SK-N-SH (cell line): ENCODE measurements at regions of chr5 and their contacts with region 1.

Region 1: DNA sequence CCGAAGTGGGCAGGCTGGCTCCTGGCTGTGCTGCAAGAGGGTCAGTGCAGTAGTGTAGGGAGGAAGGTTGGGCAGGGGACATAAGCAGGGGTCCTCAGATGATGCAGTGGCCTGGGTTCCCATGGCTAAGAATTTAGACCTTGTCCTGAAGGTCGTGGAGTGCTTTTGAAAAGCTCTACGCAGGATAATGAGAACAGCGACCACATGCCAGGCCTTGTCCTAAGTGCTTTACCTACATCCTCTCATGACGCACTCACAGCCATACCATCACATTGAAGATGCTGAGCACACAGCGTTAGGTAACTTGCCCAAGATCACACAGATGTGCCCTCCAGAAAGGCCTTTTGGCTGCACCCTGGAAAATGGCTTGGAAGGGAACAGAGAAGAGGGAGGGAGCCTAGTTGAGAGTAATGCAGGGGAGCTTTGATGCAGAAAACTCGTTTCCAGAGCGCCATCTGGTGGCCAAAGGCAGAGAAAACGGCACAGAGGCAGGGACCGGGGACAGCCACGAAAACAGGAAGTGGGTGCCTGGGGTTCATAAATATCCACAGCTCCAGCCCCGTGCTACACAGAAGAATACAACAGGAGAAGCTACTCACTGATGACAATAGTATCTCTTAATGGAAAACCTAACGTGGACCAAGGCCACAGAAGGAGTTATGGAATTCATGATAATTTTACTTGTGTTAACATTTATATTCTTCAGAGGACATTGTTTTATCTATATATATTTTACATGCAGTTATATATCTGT is 2.6 kb upstream of the PCDH12 start:
- DNase-seq: peak; percentile 87
- H3K4me3 ChIP-seq: peak overlapping the region in 1 of 2 experiments; percentile 43; a peak in 1 of 4 replicates
- H3K27ac ChIP-seq: no peak overlapping the region
- H3K4me1 ChIP-seq: peaks cover 0 to 17% of the 10 kb centered on the region in 2 experiments; a peak in 2 of 4 replicates
- H3K27me3 ChIP-seq: no peaks in the 10 kb centered on the region
- CTCF ChIP-seq: peak; percentile 89
- EP300 ChIP-seq: no peak
- RAD21 ChIP-seq: peak; percentile 90

Region 2: DNA sequence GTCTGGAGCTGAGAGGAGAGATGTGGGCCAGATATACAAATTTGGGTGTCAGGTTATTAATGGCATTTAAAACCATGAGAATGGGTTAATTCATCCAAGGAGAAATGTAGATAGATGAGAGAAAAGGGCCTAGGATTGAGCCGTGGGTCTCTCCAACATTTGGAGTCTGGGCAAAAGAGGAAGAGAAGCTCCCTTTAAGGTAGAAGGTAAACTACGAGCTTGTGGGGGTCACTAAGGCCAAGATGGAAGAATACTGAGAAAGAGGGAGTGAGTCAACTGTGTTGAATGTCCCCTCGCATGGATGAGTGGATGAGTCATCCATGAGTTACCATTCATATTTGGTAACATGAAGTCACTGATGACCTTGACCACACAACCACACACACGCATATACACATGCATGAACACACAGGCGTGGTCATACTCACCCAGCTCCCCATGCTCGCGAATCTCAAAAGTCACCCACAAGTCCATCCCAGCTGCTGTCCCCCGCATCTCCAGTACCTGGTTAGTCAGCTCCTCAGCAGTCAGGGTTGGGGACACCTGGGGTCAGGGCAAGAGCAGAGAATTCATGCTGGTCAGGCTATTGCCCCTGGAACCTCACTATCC is 302.6 kb before region 1 on chr5:
- CTCF ChIA-PET with region 1: interaction called, 17 read pairs
- POLR2A ChIA-PET with region 1: no interaction called
- DNase-seq: no peak
- H3K4me3 ChIP-seq: no peak overlapping the region
- H3K27ac ChIP-seq: peak overlapping the region in 1 of 2 experiments; percentile 48; a peak in 2 of 4 replicates
- H3K4me1 ChIP-seq: peaks cover 0 to 8% of the 10 kb centered on the region in 2 experiments; a peak in 2 of 4 replicates
- H3K27me3 ChIP-seq: no peaks in the 10 kb centered on the region
- CTCF ChIP-seq: no peak
- EP300 ChIP-seq: no peak
- RAD21 ChIP-seq: no peak

Region 3: GRCh38 chr5:141681695-141682641 is 278.7 kb before region 1 on chr5 and contains the start of gene ARAP3:
- CTCF ChIA-PET with region 1: interaction called, 27 read pairs
- POLR2A ChIA-PET with region 1: interaction called, 5 read pairs
- DNase-seq: peak; percentile 91
- H3K4me3 ChIP-seq: peak within 1 kb of the TSS; percentile 52 to 55
- H3K27ac ChIP-seq: peak within 1 kb of the TSS; percentile 72 to 96
- H3K4me1 ChIP-seq: peaks cover 19 to 40% of the 10 kb centered on the region in 2 experiments; a peak in 3 of 4 replicates
- H3K27me3 ChIP-seq: no peaks in the 10 kb centered on the region
- CTCF ChIP-seq: no peak
- EP300 ChIP-seq: peak in 1 of 2 experiments; percentile 47; a peak in 1 of 4 replicates
- RAD21 ChIP-seq: no peak
- polyA plus RNA-seq, gene ARAP3: 5.5 and 6.5 TPM in 2 replicates

Region 4: GRCh38 chr5:141811287-141812155 is 149.1 kb before region 1 on chr5:
- CTCF ChIA-PET with region 1: interaction called, 33 read pairs
- POLR2A ChIA-PET with region 1: no interaction called
- DNase-seq: peak; percentile 86
- H3K4me3 ChIP-seq: peak overlapping the region in 1 of 2 experiments; percentile 24; a peak in 2 of 4 replicates
- H3K27ac ChIP-seq: no peak overlapping the region
- H3K4me1 ChIP-seq: peaks cover 0 to 16% of the 10 kb centered on the region in 2 experiments; a peak in 1 of 4 replicates
- H3K27me3 ChIP-seq: peaks cover 19% of the 10 kb centered on the region
- CTCF ChIP-seq: peak; percentile 75
- EP300 ChIP-seq: no peak
- RAD21 ChIP-seq: peak; percentile 52; the same call in 1 of the 2 replicates

Region 5: DNA sequence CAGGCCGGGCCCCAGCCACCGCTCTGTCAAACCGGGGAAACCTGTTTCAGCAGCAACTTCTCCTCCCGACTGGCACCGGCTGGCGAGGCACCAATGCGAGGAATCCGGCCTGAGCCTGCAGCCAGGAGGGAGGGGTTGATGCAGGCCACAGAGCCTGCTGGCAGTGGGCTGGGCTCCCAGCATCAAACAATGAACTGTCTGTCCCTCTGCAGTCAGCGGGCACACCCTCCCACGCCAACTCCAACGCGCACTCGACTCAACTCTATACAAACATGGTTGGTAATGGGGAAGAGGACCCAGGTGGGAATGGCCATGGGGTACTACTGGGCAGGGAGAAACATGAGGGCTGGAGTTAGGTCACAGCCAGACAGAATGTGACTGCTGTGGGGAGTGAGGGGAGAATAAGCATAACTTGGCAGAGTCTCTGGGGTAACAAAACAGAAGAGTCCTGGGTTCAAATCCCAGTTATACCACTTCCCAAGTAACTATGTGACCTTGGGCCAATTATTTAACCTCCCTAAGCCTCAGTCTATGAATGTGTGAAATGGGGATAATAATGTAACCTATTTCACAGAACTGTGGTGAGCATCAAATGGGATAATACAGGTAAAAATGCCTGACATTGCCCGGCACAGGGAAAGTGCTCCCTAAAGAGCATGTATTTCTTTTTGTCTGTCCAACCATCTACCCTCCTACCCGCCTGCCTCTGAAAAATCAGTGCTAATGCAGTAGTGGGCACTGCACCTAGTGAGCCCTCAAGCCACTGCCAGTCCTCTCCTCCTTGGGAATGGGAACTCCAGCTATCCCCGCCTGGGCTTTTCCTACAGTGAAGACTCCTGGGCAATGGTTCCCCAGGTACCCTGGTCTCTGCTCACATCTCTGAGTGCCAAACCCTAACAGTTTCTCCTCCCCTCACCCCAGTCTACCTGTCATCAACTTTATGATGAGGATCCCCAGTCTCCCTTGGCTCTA is 94.2 kb before region 1 on chr5:
- CTCF ChIA-PET with region 1: interaction called, 10 read pairs
- POLR2A ChIA-PET with region 1: no interaction called
- DNase-seq: no peak
- H3K4me3 ChIP-seq: no peak overlapping the region
- H3K27ac ChIP-seq: no peak overlapping the region
- H3K4me1 ChIP-seq: peaks cover 0 to 9% of the 10 kb centered on the region in 2 experiments; a peak in 1 of 4 replicates
- H3K27me3 ChIP-seq: peaks cover 40% of the 10 kb centered on the region
- CTCF ChIP-seq: no peak
- EP300 ChIP-seq: no peak
- RAD21 ChIP-seq: no peak

Region 6: GRCh38 chr5:141923448-141924352 is 36.9 kb before region 1 on chr5 and contains the start of gene DELE1:
- CTCF ChIA-PET with region 1: interaction called, 71 read pairs
- POLR2A ChIA-PET with region 1: interaction called, 8 read pairs
- DNase-seq: peak; percentile 95
- H3K4me3 ChIP-seq: peak within 1 kb of the TSS; percentile 87 to 96
- H3K27ac ChIP-seq: peak within 1 kb of the TSS; percentile 98 to 99
- H3K4me1 ChIP-seq: peaks cover 0 to 8% of the 10 kb centered on the region in 2 experiments; a peak in 2 of 4 replicates
- H3K27me3 ChIP-seq: no peaks in the 10 kb centered on the region
- CTCF ChIP-seq: no peak
- EP300 ChIP-seq: peak in 1 of 2 experiments; percentile 36; a peak in 1 of 4 replicates
- RAD21 ChIP-seq: no peak
- polyA plus RNA-seq, gene DELE1: 60.3 and 78.8 TPM in 2 replicates

Region 7: DNA sequence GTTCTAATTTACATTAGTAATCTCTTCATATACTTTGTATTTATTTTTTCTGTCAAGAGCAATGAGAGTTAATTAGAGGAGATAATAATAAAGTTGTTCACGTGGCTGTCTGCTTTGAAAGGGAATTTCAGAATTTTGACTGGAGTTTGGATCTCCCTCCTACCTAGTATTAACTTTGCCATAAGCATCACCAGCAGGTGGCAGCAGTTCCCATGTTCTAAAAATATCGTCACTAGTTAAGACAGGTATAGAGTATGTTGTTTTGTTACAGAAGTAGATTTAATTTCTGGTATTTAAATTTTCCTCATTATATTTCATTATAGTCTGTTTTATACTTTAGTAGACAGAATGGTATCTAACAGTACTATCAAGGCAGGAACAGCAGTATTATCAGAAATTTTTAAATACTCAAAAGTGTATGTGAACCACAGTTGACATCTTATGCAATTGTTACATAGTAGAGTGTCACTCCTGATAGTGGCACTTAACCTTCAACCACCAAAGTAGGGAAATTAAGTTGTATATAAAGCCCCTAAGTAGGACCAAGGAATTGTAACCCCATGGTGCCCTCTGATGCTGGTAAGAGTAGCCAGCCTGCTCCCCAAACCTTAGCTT is 31.8 kb after region 1 on chr5:
- CTCF ChIA-PET with region 1: interaction called, 16 read pairs
- POLR2A ChIA-PET with region 1: no interaction called
- DNase-seq: peak; percentile 65
- H3K4me3 ChIP-seq: no peak overlapping the region; a peak in 1 of 4 replicates
- H3K27ac ChIP-seq: no peak overlapping the region
- H3K4me1 ChIP-seq: no peaks in the 10 kb centered on the region
- H3K27me3 ChIP-seq: no peaks in the 10 kb centered on the region
- CTCF ChIP-seq: peak; percentile 90
- EP300 ChIP-seq: no peak
- RAD21 ChIP-seq: peak; percentile 75

Region 8: GRCh38 chr5:142356716-142357473 is 396.3 kb after region 1 on chr5:
- CTCF ChIA-PET with region 1: no interaction called
- POLR2A ChIA-PET with region 1: no interaction called
- DNase-seq: peak; percentile 92
- H3K4me3 ChIP-seq: peak overlapping the region; percentile 58 to 59
- H3K27ac ChIP-seq: peak overlapping the region; percentile 98 to 99
- H3K4me1 ChIP-seq: peaks cover 29 to 34% of the 10 kb centered on the region in 2 experiments
- H3K27me3 ChIP-seq: no peaks in the 10 kb centered on the region
- CTCF ChIP-seq: no peak
- EP300 ChIP-seq: peak; percentile 46 to 75; a peak in 3 of 4 replicates
- RAD21 ChIP-seq: no peak